ENCODE measurements at regions of chr5 and their contacts with region 1.

Region 1: GRCh38 chr5:137075163-137075970 is 423.8 kb downstream of the SPOCK1 start:
- DNase-seq: peak; percentile 77
- H3K4me3 ChIP-seq: peak overlapping the region in 1 of 2 experiments; percentile 45; a peak in 1 of 4 replicates
- H3K27ac ChIP-seq: no peak overlapping the region; a peak in 1 of 4 replicates
- H3K4me1 ChIP-seq: peaks cover 4 to 20% of the 10 kb centered on the region in 2 experiments; a peak in 2 of 4 replicates
- H3K27me3 ChIP-seq: no peaks in the 10 kb centered on the region
- CTCF ChIP-seq: peak; percentile 39
- EP300 ChIP-seq: no peak
- RAD21 ChIP-seq: peak; percentile 55

Region 2: DNA sequence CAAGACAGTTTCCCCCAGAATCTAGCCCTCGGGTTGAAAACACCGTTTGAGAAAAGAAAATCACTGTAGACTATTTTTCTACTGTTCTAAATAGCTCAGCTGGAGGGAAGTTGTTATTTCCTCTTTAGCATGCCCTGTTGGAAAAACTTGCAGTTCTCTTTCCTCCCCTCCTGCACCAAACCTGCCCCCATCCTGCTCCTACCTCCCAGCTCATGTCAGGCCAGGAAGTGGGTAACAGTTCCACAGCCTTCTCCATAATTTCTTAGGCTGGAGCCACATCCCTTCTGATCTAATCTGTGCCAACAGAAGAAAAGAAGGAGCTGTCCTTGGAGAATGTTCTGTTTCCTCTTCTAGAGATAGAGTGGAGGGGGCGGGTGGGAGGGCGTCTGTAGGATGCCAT is 14.0 kb before region 1 on chr5:
- CTCF ChIA-PET with region 1: interaction called, 13 read pairs
- POLR2A ChIA-PET with region 1: no interaction called
- DNase-seq: no peak
- H3K4me3 ChIP-seq: no peak overlapping the region
- H3K27ac ChIP-seq: no peak overlapping the region
- H3K4me1 ChIP-seq: peaks cover 0 to 5% of the 10 kb centered on the region in 2 experiments; a peak in 1 of 4 replicates
- H3K27me3 ChIP-seq: no peaks in the 10 kb centered on the region
- CTCF ChIP-seq: no peak
- EP300 ChIP-seq: no peak
- RAD21 ChIP-seq: no peak

Region 3: GRCh38 chr5:137086342-137086741 is 11.0 kb after region 1 on chr5:
- CTCF ChIA-PET with region 1: interaction called, 30 read pairs
- POLR2A ChIA-PET with region 1: no interaction called
- DNase-seq: no peak
- H3K4me3 ChIP-seq: no peak overlapping the region
- H3K27ac ChIP-seq: no peak overlapping the region
- H3K4me1 ChIP-seq: peaks cover under 1 to 12% of the 10 kb centered on the region in 2 experiments; a peak in 2 of 4 replicates
- H3K27me3 ChIP-seq: no peaks in the 10 kb centered on the region
- CTCF ChIP-seq: no peak
- EP300 ChIP-seq: no peak
- RAD21 ChIP-seq: no peak

Region 4: DNA sequence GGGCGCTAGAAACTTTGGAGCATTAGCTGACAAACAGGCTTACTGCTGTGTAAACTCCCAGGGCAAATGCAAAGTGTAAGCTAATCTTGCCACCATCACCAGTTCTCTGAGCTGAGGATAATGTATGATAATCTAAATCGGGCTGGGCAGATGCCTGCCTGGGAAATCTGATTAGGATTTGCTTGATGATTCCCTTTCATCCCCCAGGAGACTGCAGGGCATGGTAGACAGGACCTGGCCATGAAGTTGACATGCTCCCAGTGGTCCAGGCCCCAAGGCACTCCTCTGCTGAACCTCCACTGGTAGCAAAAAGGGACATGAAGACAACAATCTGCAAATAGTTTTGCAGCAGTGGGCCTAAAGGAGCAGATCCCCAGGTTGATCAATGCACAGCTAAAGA is 106.3 kb after region 1 on chr5:
- CTCF ChIA-PET with region 1: interaction called, 15 read pairs
- POLR2A ChIA-PET with region 1: no interaction called
- DNase-seq: peak; percentile 76
- H3K4me3 ChIP-seq: no peak overlapping the region
- H3K27ac ChIP-seq: peak overlapping the region in 1 of 2 experiments; percentile 69; a peak in 2 of 4 replicates
- H3K4me1 ChIP-seq: peaks cover 0 to 56% of the 10 kb centered on the region in 2 experiments; a peak in 3 of 4 replicates
- H3K27me3 ChIP-seq: no peaks in the 10 kb centered on the region
- CTCF ChIP-seq: no peak
- EP300 ChIP-seq: peak in 1 of 2 experiments; percentile 99; a peak in 2 of 4 replicates
- RAD21 ChIP-seq: peak; percentile 27; the same call in 1 of the 2 replicates

Measured in SK-N-SH (cell line).